B cell (primary cell): ENCODE measurements at regions of chr19 and their contacts with region 1.

Region 1: GRCh38 chr19:54463531-54464043 is at the start of gene LENG9:
- DNase-seq: no peak
- ATAC-seq: peak; percentile 62
- H3K4me3 ChIP-seq: peak within 1 kb of the TSS; percentile 65 to 88 (median 74)
- H3K4me3 Mint-ChIP-seq: peak within 1 kb of the TSS; percentile 91
- H3K27ac ChIP-seq: peak within 1 kb of the TSS; percentile 84 to 85
- H3K27ac Mint-ChIP-seq: peak within 1 kb of the TSS; percentile 93
- H3K4me1 ChIP-seq: peaks cover 16 to 29% of the 10 kb centered on the region in 2 donors
- H3K4me1 Mint-ChIP-seq: peaks cover 23% of the 10 kb centered on the region
- H3K27me3 ChIP-seq: peaks cover 0 to 3% (median 0%) of the 10 kb centered on the region in 4 experiments
- H3K27me3 Mint-ChIP-seq: peaks cover 6% of the 10 kb centered on the region
- CTCF ChIP-seq: no peak
- total RNA-seq, gene LENG9: 6.6 and 6.9 TPM in 2 replicates

Region 2: GRCh38 chr19:54418030-54418929 is 45.3 kb before region 1 on chr19:
- CTCF ChIA-PET with region 1: no interaction called
- POLR2A ChIA-PET with region 1: no interaction called
- intact Hi-C with region 1: loop called (anchors 1 kb)
- DNase-seq: peak; percentile 26
- ATAC-seq: peak; percentile 14
- H3K4me3 ChIP-seq: peak overlapping the region in 1 of 5 experiments; percentile 19
- H3K4me3 Mint-ChIP-seq: peak overlapping the region; percentile 33
- H3K27ac ChIP-seq: no peak overlapping the region
- H3K27ac Mint-ChIP-seq: no peak overlapping the region
- H3K4me1 ChIP-seq: peaks cover 14 to 33% of the 10 kb centered on the region in 2 donors
- H3K4me1 Mint-ChIP-seq: peaks cover 12% of the 10 kb centered on the region
- H3K27me3 ChIP-seq: peaks cover 0 to 55% (median 28%) of the 10 kb centered on the region in 4 experiments
- H3K27me3 Mint-ChIP-seq: peaks cover 46% of the 10 kb centered on the region
- CTCF ChIP-seq: no peak

Region 3: DNA sequence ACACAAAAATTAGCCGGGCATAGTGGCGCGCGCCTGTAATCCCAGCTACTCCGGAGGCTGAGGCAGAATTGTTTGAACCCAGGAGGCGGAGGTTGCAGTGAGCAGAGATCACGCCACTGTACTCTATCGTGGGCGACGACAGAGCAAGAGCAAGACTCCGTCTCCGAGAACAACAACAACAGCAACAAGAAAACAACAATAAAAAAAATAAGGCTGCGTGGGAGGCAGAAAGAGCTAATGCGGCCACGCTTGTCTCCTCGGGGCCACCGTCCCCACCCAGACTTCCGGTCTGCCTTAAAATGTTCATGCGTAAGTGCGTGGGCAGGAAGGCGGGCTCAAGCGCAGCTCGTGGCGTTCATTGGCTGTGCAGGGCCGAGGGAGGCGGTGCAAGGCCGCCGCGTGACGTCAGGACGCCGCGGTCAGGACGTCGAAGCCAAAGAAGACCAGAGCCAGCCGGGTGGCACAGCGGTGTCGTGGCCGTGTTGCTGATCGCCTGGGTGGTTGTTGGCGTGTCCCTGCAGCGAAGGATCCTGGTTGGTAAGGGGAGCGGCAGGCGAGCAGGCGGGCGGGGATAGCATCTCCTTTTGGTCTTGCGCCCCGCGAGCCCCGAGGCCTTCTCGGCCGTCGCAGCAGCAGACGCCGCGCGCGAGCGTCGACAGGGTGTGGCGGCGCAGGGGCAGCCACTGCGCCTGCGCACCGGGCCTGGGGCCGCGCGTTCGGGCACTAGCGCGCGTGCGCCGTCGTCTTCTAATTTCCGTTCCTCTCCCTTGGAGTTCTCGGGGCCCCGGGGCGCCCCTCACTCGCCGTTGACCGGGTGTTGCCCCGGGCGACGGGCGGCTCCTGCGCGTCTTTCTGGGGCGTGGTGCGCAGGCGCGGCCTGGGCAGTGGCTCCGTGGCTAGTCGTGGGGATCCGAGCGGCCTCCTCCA is 14.6 kb before region 1 on chr19 and contains the start of gene LENG8:
- CTCF ChIA-PET with region 1: interaction called, 3 read pairs
- POLR2A ChIA-PET with region 1: interaction called, 10 read pairs
- intact Hi-C with region 1: loop called (anchors 1 kb)
- DNase-seq: peak; percentile 100
- ATAC-seq: peak; percentile 93
- H3K4me3 ChIP-seq: peak within 1 kb of the TSS; percentile 71 to 91 (median 88)
- H3K4me3 Mint-ChIP-seq: peak within 1 kb of the TSS; percentile 95
- H3K27ac ChIP-seq: peak within 1 kb of the TSS; percentile 93 to 98
- H3K27ac Mint-ChIP-seq: peak within 1 kb of the TSS; percentile 100
- H3K4me1 ChIP-seq: peaks cover 31 to 33% of the 10 kb centered on the region in 2 donors
- H3K4me1 Mint-ChIP-seq: peaks cover 48% of the 10 kb centered on the region
- H3K27me3 ChIP-seq: no peaks in the 10 kb centered on the region
- H3K27me3 Mint-ChIP-seq: no peaks in the 10 kb centered on the region
- CTCF ChIP-seq: no peak
- total RNA-seq, gene LENG8: 668 and 687 TPM in 2 replicates

Region 4: DNA sequence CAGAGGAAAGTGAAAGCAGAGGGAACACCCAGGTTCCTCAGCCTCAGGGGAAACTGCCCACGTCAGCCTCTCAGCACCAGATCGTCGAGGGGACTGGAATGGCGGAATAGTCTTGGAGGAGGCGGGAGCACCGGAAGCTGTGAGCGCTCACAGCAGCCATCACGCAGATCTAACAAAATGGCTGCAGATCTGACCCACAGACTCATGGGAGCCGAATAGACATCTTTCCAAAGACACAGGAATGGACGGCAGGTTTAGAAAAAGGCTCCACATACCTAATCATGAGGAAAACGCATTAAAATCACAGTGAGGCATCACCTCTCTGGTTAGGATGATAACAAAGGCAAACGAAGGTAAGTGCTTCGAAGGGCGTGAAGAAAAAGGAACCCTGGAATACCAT is 98.3 kb after region 1 on chr19:
- CTCF ChIA-PET with region 1: no interaction called
- POLR2A ChIA-PET with region 1: no interaction called
- intact Hi-C with region 1: no loop called
- DNase-seq: no peak
- ATAC-seq: no peak
- H3K4me3 ChIP-seq: no peak overlapping the region
- H3K4me3 Mint-ChIP-seq: no peak overlapping the region
- H3K27ac ChIP-seq: no peak overlapping the region
- H3K27ac Mint-ChIP-seq: no peak overlapping the region
- H3K4me1 ChIP-seq: no peaks in the 10 kb centered on the region
- H3K4me1 Mint-ChIP-seq: no peaks in the 10 kb centered on the region
- H3K27me3 ChIP-seq: peaks cover 0 to 3% (median 1%) of the 10 kb centered on the region in 4 experiments
- H3K27me3 Mint-ChIP-seq: peaks cover 19% of the 10 kb centered on the region
- CTCF ChIP-seq: no peak